ENCODE measurements at regions of chr18 and their contacts with region 1.

Region 1: DNA sequence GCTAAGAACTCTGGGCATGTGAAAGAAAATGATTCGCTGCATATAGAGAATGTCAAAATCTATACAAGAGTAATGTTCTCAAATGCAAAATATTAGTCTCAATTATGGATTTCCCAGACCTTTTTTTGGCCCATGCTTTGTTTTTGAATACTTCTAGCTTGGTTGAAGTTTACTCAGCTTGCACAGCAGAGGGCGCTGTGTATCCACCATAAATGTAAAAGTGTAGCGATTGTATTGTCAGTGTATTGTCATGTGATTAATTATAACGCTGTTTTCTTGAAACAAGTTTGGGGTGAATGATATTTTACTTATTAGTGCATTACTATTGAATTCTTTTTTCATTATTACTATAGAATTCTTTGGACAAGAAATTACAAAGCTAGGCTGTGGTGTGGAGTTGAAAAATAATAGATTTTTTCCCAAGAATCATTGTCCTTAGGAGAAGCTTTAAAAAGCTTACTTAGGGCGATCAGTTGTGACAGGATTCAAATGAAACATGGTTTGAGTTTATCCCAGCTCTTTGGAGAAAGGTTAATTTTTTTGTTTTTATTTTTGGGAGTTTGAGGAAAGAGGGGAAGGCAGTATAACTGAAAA is 98.3 kb downstream of the PIK3C3 start:
- DNase-seq: peak; percentile 37
- ATAC-seq: peak; percentile 63
- H3K4me3 ChIP-seq: no peak overlapping the region
- H3K27ac ChIP-seq: no peak overlapping the region
- H3K4me1 ChIP-seq: peaks cover 6% of the 10 kb centered on the region
- H3K27me3 ChIP-seq: no peaks in the 10 kb centered on the region
- CTCF ChIP-seq: peak; percentile 62

Region 2: DNA sequence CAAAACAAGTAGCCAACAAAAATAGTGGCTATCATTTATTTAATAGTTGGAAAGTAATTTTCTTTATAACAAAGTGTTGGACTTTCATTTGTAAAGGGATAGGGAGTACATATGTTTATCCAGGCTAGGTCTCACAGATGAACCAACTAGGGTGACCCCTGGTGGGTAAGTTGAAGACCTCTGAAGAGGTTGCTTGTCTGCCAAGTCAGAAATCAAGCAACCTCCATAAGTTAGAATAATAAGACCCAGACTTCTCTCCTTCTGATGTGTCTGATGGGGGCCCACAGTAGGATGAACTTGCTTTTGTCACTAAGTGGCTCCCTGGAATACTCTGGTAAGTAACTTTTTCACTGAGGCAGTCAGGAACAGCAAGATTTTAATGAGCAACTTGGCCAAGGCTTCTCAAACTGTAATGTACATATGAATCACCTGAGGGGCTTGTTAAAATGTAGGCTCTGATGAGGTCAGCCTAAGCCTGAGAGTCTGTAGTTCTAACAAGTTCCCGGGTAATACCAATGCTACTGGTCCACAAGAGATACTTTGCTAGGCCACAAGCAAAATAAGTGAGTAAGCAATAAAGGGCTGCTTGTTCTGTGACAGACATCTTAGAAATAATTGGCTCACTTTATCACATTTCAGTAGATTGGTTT is 221.3 kb after region 1 on chr18:
- CTCF ChIA-PET with region 1: no interaction called
- POLR2A ChIA-PET with region 1: no interaction called
- intact Hi-C with region 1: loop called (anchors 10 kb)
- DNase-seq: peak; percentile 6
- ATAC-seq: peak; percentile 81
- H3K4me3 ChIP-seq: no peak overlapping the region
- H3K27ac ChIP-seq: no peak overlapping the region
- H3K4me1 ChIP-seq: no peaks in the 10 kb centered on the region
- H3K27me3 ChIP-seq: no peaks in the 10 kb centered on the region
- CTCF ChIP-seq: peak; percentile 45; the same call in 1 of the 2 replicates

Region 3: DNA sequence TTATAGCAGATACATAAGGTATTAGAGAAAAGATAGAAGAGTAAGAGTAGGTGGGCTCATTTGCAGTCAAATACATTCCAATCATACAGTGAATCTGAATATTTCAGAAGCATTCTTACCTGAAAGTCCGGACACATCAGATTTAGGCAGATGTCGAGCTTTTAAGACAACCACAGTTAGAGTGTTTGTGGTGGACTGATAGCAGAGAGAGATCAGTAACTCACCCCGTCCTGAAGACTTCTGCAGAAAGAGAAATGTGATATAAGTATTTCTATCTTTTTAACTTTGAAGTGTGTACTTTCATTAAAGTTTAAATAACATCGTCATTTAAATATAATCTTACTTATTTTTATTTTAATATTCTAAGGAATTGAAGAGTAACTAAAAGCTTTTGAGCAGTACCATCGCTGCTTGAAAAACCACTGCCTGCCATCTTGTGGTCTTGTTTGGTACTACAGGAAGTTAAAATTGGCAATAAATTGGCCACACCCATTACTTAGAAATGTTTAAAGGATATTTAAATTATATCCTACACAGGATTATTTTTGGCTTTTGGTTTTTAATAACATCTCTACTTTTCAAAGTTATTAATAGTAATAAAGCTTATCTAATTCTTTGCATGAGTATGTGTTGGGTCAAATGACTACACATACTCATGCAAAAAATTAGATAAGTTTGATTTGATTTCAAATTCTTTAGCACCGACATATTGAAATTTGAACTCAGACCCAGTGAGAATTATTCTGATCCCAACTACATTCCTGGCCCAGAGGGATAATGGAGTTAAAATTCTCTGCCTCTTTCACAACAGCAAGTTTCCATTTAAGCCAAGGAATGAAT is 1218.5 kb after region 1 on chr18:
- CTCF ChIA-PET with region 1: no interaction called
- POLR2A ChIA-PET with region 1: no interaction called
- intact Hi-C with region 1: loop called (anchors 5 kb)
- DNase-seq: peak; percentile 60
- ATAC-seq: no peak
- H3K4me3 ChIP-seq: no peak overlapping the region
- H3K27ac ChIP-seq: no peak overlapping the region
- H3K4me1 ChIP-seq: no peaks in the 10 kb centered on the region
- H3K27me3 ChIP-seq: no peaks in the 10 kb centered on the region
- CTCF ChIP-seq: peak; percentile 39; the same call in 1 of the 2 replicates

Region 4: DNA sequence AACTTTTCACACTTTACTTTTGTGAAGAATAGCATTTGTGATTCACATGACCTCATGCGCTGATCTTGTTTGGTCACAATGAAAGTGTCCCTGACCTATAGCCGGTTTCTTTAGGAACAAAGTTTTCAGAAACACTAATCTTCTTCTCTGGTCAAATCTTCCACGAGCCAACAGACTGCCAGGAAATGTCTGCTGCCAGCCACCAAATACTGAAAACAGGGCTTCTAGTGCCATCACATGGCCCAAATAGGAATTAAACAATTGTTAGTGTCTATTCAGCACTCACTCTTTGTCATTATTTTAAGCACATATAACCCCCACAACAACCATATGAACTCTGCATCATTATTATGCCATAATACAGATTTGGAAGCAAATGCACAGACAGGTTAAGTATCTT is 1510.5 kb after region 1 on chr18:
- CTCF ChIA-PET with region 1: interaction called, 4 read pairs
- POLR2A ChIA-PET with region 1: no interaction called
- intact Hi-C with region 1: loop called (anchors 2 kb)
- DNase-seq: peak; percentile 38
- ATAC-seq: peak; percentile 65
- H3K4me3 ChIP-seq: no peak overlapping the region
- H3K27ac ChIP-seq: no peak overlapping the region
- H3K4me1 ChIP-seq: no peaks in the 10 kb centered on the region
- H3K27me3 ChIP-seq: no peaks in the 10 kb centered on the region
- CTCF ChIP-seq: peak; percentile 54

Measured in PC-3 (cell line).